ENCODE measurements at regions of chr1 and their contacts with region 1.

Region 1: GRCh38 chr1:167442124-167442848 is 76.0 kb downstream of the CD247 start:
- DNase-seq: peak; percentile 43 to 96 (median 81)

Region 2: DNA sequence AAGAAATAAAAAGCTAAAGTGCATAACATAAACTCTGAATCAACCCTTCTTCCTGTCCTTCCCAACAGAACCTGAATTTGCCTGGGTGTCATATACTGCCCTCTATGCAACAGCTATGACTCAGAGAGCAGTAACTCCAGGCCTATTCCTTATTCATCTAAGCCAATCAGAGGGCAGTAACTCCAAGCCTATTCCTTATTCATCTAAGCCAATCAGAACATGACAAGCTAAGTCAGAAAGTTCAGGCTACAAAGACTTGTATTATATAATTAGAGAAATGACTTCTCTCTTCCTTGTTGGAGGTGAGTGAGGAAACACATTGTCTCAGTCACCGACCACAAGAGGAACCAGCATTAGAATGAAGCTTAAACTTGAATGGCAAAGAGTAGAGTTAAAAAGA is 540.0 kb before region 1 on chr1:
- intact Hi-C with region 1: loop called (anchors 10 kb)
- DNase-seq: no peak

Region 3: DNA sequence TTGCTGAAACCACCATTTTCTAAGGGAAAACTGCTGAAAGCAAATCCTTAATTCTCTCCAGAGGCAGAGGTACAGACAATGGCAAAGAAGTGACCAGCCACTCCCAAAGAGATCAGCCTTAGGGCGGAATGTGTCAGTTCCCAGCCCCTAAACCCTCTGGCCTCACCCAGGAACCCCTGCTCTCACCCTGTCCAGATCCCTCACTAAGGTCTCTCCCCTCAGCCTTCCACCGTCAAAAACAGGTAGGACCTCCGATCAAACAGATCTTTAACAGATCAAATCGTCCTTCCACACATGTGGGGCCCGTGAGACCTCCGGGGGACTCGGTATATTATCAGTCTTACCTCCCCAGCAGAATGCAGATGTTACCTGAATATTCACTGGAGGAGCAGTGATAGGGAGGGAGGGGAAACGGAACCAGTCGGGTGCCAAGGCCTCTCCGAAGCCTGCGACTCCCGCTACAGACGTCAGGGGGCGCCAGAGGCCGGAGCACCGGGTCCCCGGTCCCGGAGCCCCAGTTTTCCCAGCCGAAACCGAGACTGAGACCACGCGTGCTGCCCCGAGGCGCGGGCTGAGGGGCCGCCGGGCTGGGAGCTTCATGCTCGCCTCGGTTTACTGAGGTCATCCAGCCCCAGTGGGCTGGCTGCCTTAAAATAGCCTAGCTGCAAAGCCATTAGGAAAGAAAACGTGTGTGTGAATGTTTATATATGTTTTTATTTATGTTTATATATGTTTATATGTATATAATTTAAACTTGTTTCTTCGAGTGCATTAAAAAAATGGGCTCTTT is 375.8 kb before region 1 on chr1:
- intact Hi-C with region 1: loop called (anchors 1 kb)
- DNase-seq: peak; percentile 65 to 98 (median 84)

Region 4: DNA sequence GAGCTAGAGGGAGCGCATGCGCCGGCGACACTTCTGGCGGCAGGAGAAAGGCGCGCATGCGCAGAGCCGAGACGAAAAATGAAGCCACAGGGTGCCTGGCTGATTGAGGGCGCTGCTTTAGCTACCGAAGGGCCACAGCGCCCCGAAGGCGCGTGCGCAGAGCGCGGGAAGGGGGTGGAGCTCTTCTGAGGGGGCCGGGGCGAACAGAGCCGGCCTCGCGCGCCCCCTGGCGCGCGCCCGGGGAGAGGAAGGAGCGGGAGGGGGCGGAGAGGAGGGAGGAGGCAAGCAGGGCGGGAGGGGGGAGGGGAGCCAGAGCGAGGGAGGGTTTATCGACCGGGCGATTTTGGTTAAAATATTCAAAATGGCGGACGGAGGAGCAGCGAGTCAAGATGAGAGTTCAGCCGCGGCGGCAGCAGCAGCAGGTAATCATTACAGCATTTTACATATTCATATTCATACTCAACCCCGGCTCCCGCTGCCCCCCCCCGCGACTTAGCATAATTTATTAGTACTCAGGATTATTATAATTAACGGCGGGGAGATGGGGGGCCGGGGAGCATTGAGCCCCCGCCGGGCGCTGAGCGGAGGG is 221.7 kb before region 1 on chr1 and contains the start of gene POU2F1:
- intact Hi-C with region 1: loop called (anchors 5 kb)
- DNase-seq: peak; percentile 95 to 99 (median 96)

Region 5: DNA sequence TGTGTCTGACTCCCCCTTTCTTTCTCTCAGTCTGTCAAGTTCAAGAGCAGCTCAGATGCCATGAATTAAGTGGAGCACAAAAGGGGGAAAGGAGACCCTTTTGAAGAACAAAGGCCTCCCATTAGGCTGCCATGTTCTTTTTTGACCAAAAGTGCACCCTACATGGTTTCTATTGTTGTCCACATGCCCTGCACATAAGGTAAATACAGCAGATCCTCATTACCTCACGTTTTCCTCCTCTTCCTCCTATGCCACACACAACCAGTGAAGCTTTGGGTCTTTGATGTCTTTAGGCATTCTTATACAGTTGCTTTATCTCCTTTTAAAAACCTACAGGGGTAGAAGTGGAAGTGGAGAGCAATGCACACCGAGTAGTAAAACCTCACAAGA is 173.9 kb before region 1 on chr1:
- intact Hi-C with region 1: loop called (anchors 1 kb)
- DNase-seq: no peak

Region 6: GRCh38 chr1:167533851-167534300 is 91.6 kb after region 1 on chr1:
- intact Hi-C with region 1: loop called (anchors 5 kb)
- DNase-seq: peak in 9 of 10 donors; percentile 59 to 95 (median 74)

Measured in posterior cingulate gyrus (tissue), 11 donors.